Activated naive CD4-positive, alpha-beta T cell treated with anti-CD3 and anti-CD28 coated beads for 36 hours (primary cell): ENCODE measurements at regions of chr19 and their contacts with region 1.

Region 1: DNA sequence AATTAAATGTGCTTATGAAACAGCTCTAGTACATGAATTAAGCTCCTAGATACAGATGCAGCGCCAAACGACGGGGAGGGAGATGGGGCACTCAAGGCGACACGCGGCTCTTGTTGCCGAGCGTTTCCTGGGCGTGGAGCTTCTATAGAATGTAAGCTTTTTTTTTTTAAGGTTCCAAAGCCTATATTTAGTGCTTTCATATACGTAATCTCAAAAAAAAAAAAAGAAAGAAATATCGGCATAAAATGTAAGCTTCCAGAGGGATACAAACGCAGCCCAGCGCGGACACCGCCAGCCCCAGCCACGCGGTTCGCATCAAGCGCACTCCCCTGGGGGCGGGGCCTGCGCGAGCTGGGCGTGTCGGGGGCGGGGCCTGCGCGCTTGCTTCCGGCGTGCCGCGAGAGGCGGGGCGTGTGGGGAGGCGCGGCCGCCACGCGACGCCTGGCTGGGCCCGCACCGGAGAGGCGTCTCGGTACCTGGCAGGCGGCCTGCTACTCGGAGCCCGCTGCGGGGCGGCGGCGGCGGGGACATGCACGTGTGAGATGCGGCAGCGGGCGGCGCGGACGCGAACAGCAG is at the start of gene URI1:
- DNase-seq: peak; percentile 94
- H3K4me3 Mint-ChIP-seq: peak within 1 kb of the TSS; percentile 97
- H3K27ac Mint-ChIP-seq: peak within 1 kb of the TSS; percentile 90
- H3K4me1 Mint-ChIP-seq: peaks cover 38% of the 10 kb centered on the region
- H3K27me3 Mint-ChIP-seq: peaks cover 2% of the 10 kb centered on the region
- total RNA-seq, gene URI1: 65.9 to 69.8 TPM

Region 2: DNA sequence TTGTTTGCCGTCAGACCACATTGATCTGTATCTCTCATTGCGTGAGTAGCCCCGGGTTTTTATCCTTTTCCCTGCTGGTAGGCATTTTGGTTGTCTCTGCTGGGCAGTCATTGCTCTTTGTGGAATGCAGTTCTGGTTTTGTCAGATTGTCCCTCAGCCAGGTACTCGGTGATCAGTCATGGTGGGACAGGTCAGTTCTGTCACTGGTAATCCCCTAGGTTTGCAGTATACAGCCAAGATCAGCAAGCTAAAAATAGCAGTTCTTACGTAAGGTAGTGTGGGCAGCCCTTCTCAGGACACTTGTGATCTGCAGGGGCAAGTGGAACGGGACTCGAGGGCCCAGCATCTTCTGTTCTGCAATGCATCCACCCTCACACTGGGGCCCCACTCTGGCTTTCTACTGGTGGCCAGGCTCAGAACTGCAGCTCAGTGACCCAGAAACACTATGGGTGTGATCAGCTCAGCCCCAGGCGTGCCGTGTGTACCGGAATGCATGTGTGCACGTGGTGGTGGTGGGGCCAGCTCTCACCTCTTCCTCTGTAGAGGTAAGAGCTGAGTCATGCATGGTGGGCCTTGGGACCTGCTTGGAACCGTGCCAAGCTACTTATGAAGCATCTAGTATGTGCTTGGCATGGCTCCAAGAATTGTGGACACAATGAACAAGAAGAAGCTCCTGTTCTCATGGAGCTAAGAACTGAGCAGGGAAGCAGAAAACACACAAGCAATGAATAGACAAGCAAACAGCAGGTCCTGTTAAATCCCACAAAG is 270.3 kb before region 1 on chr19:
- CTCF ChIA-PET with region 1: interaction called, 3 read pairs
- intact Hi-C with region 1: loop called (anchors 5 kb)
- DNase-seq: peak; percentile 96
- H3K4me3 Mint-ChIP-seq: peak overlapping the region; percentile 69
- H3K27ac Mint-ChIP-seq: peak overlapping the region; percentile 96
- H3K4me1 Mint-ChIP-seq: peaks cover 91% of the 10 kb centered on the region
- H3K27me3 Mint-ChIP-seq: no peaks in the 10 kb centered on the region

Region 3: GRCh38 chr19:29837448-29837981 is 104.4 kb before region 1 on chr19:
- CTCF ChIA-PET with region 1: interaction called, 3 read pairs
- intact Hi-C with region 1: loop called (anchors 2 kb)
- DNase-seq: peak; percentile 79
- H3K4me3 Mint-ChIP-seq: peak overlapping the region; percentile 58
- H3K27ac Mint-ChIP-seq: peak overlapping the region; percentile 97
- H3K4me1 Mint-ChIP-seq: peaks cover 57% of the 10 kb centered on the region
- H3K27me3 Mint-ChIP-seq: no peaks in the 10 kb centered on the region

Region 4: GRCh38 chr19:29953352-29954247 is 11.7 kb after region 1 on chr19:
- CTCF ChIA-PET with region 1: interaction called, 5 read pairs
- intact Hi-C with region 1: loop called (anchors 1 kb)
- DNase-seq: no peak
- H3K4me3 Mint-ChIP-seq: no peak overlapping the region
- H3K27ac Mint-ChIP-seq: peak overlapping the region; percentile 85
- H3K4me1 Mint-ChIP-seq: peaks cover 58% of the 10 kb centered on the region
- H3K27me3 Mint-ChIP-seq: no peaks in the 10 kb centered on the region

Region 5: DNA sequence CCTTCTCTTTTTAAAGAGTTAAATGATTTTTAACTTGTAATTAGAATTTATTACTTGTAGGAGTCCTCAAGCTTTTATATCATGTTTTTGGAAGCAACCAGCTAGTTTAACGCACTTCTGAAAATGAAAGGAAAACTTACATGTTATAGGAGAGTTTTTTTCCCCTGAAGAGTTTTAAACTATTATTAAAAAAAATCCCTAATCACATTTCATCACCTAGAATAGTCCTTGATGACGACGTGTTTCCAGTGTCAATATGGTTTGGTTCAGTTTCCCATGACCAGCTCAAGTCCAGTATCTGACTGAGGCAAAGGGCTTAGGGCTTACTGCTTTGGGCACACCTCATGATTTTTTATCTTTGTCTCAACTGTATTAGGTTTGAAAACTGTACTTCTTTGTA is 36.2 kb after region 1 on chr19:
- CTCF ChIA-PET with region 1: no interaction called
- intact Hi-C with region 1: loop called (anchors 1 kb)
- DNase-seq: peak; percentile 11
- H3K4me3 Mint-ChIP-seq: peak overlapping the region; percentile 12
- H3K27ac Mint-ChIP-seq: no peak overlapping the region
- H3K4me1 Mint-ChIP-seq: peaks cover 53% of the 10 kb centered on the region
- H3K27me3 Mint-ChIP-seq: no peaks in the 10 kb centered on the region